A673 (cell line): ENCODE measurements at regions of chr6 and their contacts with region 1.

Region 1: DNA sequence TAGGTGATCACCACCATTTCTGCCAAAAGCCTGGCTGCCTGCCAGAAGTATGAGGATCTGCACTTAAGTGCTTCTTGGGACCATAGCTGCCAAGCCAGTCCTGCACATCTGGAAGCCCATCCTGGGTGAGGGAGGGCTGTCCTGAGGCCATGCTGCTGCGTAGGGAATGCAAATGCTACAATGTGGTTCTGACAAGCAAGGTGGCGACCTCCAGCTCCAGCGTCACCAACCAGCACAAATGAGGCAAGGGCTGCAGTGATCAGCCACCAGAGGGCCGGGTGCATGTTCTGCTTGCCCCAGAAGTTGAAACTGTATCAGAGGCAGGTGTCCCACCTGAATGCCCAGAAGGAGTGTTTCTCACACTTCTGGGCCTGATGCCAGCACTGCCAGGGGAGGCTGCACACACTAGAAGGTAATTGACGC is 99.1 kb upstream of the KCNQ5 start:
- DNase-seq: peak; percentile 14
- H3K4me3 ChIP-seq: no peak overlapping the region
- H3K27ac ChIP-seq: no peak overlapping the region
- H3K4me1 ChIP-seq: no peaks in the 10 kb centered on the region
- H3K27me3 ChIP-seq: no peaks in the 10 kb centered on the region
- CTCF ChIP-seq: peak; percentile 38

Region 2: GRCh38 chr6:72748759-72749158 is 226.0 kb after region 1 on chr6:
- CTCF ChIA-PET with region 1: no interaction called
- POLR2A ChIA-PET with region 1: no interaction called
- intact Hi-C with region 1: no loop called
- DNase-seq: peak; percentile 90
- H3K4me3 ChIP-seq: no peak overlapping the region
- H3K27ac ChIP-seq: no peak overlapping the region
- H3K4me1 ChIP-seq: no peaks in the 10 kb centered on the region
- H3K27me3 ChIP-seq: no peaks in the 10 kb centered on the region
- CTCF ChIP-seq: no peak

Region 3: GRCh38 chr6:73236147-73236750 is 713.5 kb after region 1 on chr6:
- CTCF ChIA-PET with region 1: no interaction called
- POLR2A ChIA-PET with region 1: interaction called, 15 read pairs
- intact Hi-C with region 1: no loop called
- DNase-seq: peak; percentile 10
- H3K4me3 ChIP-seq: no peak overlapping the region
- H3K27ac ChIP-seq: no peak overlapping the region
- H3K4me1 ChIP-seq: no peaks in the 10 kb centered on the region
- H3K27me3 ChIP-seq: no peaks in the 10 kb centered on the region
- CTCF ChIP-seq: no peak